OCI-LY7 (cell line): ENCODE measurements at regions of chr11 and their contacts with region 1.

Region 1: DNA sequence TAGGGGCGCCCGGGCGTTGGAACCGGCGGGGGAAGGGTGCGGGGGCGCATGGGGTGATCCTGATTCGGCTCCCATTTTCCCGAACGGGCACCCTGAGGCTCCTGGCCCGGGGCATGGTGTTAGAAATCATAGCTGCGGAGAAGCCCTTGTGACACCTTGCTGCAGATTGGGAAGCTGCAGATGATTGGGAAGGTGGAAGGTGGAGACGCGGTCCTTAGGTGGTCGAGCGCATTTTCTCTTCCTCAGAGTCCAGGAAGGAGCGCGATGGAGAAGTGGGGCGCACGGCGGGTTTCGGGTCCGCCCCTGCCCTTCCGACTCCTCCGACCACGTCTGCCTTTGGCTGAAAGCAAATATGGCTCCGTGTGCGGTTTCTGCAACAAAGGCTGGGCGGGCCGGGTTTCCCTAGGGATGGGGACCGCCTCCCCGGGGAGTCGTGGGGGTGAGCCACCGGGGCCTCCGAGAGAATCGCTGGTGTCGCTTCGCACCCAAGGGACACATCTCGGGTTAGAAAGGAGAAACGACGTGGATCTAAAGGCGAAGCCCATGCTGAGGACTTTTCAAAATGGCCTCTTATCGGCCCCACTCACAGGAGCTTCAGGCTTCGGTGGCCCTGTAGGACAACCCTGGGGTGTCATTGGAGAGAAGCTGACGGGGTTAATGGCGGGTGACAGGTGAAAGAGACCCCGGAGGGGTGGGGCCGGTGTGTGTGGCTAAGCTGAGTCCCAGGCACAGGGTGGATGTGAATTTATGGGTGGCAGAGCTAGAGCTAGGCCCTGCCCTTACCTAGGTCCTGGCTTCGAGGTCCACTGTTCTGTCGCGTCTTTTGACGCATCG is 707 bp upstream of the FTH1 start:
- DNase-seq: peak; percentile 54
- H3K4me3 ChIP-seq: peak overlapping the region; percentile 99
- H3K27ac ChIP-seq: peak overlapping the region; percentile 64
- H3K4me1 ChIP-seq: peaks cover 72% of the 10 kb centered on the region
- CTCF ChIP-seq: no peak

Region 2: DNA sequence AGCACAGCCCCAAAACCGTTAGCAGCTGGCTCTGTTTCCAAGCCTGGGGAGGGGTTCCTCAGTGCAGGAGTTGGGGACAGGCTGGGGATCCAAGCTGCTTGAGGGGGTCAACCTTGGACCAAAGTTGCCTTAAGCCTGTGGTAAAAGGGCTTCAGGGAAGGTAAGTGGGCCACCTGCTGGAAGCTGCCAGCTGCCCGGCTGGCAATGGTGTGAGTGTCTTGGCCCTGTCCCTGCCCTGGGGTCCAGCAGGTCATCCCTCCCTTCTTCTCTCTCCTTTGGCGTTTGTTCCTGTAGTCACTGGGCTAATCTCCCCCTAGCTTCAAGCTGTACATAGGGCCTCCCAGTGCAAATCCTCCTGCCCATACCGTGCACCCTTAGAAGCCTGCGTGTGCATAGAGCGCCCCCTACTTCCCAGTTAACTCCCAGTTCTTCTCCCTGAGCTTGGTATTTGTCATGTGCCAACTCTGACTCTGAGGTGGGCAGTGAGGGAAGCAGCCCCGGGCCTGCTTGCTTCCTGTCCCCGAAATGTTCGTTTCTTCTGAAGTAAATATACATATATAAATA is 180.1 kb before region 1 on chr11:
- CTCF ChIA-PET with region 1: no interaction called
- POLR2A ChIA-PET with region 1: no interaction called
- intact Hi-C with region 1: no loop called
- DNase-seq: peak; percentile 25
- H3K4me3 ChIP-seq: no peak overlapping the region
- H3K27ac ChIP-seq: no peak overlapping the region
- H3K4me1 ChIP-seq: peaks cover 6% of the 10 kb centered on the region
- CTCF ChIP-seq: peak; percentile 78

Region 3: GRCh38 chr11:62044639-62045121 is 76.5 kb after region 1 on chr11:
- CTCF ChIA-PET with region 1: no interaction called
- POLR2A ChIA-PET with region 1: interaction called, 3 read pairs
- intact Hi-C with region 1: loop called (anchors 1 kb)
- DNase-seq: no peak
- H3K4me3 ChIP-seq: no peak overlapping the region
- H3K27ac ChIP-seq: no peak overlapping the region
- H3K4me1 ChIP-seq: peaks cover 23% of the 10 kb centered on the region
- CTCF ChIP-seq: no peak